CD8-positive, alpha-beta memory T cell (primary cell): ENCODE measurements at regions of chr9 and their contacts with region 1.

Region 1: GRCh38 chr9:104093647-104094533 is at the start of gene SMC2:
- DNase-seq: peak; percentile 84 to 97 (median 93)
- H3K4me3 ChIP-seq: peak within 1 kb of the TSS; percentile 72
- H3K4me3 Mint-ChIP-seq: peak within 1 kb of the TSS; percentile 98 to 100 (median 99)
- H3K27ac ChIP-seq: peak within 1 kb of the TSS; percentile 77
- H3K27ac Mint-ChIP-seq: peak within 1 kb of the TSS; percentile 97 to 100 (median 99)
- H3K4me1 ChIP-seq: peaks cover 16% of the 10 kb centered on the region
- H3K4me1 Mint-ChIP-seq: peaks cover 34 to 52% (median 49%) of the 10 kb centered on the region in 3 donors
- H3K27me3 ChIP-seq: no peaks in the 10 kb centered on the region
- H3K27me3 Mint-ChIP-seq: no peaks in the 10 kb centered on the region
- total RNA-seq, gene SMC2: 53.0 to 54.2 TPM

Region 2: GRCh38 chr9:103816146-103816545 is 277.7 kb before region 1 on chr9:
- CTCF ChIA-PET with region 1: no interaction called
- POLR2A ChIA-PET with region 1: no interaction called
- DNase-seq: no peak
- H3K4me3 ChIP-seq: no peak overlapping the region
- H3K4me3 Mint-ChIP-seq: no peak overlapping the region
- H3K27ac ChIP-seq: no peak overlapping the region
- H3K27ac Mint-ChIP-seq: no peak overlapping the region
- H3K4me1 ChIP-seq: no peaks in the 10 kb centered on the region
- H3K4me1 Mint-ChIP-seq: no peaks in the 10 kb centered on the region
- H3K27me3 ChIP-seq: no peaks in the 10 kb centered on the region
- H3K27me3 Mint-ChIP-seq: no peaks in the 10 kb centered on the region

Region 3: GRCh38 chr9:104075801-104076753 is 17.8 kb before region 1 on chr9:
- CTCF ChIA-PET with region 1: no interaction called
- POLR2A ChIA-PET with region 1: no interaction called
- DNase-seq: no peak
- H3K4me3 ChIP-seq: no peak overlapping the region
- H3K4me3 Mint-ChIP-seq: no peak overlapping the region
- H3K27ac ChIP-seq: no peak overlapping the region
- H3K27ac Mint-ChIP-seq: peak overlapping the region in 1 of 8 donors; percentile 46
- H3K4me1 ChIP-seq: no peaks in the 10 kb centered on the region
- H3K4me1 Mint-ChIP-seq: no peaks in the 10 kb centered on the region
- H3K27me3 ChIP-seq: no peaks in the 10 kb centered on the region
- H3K27me3 Mint-ChIP-seq: peaks cover 25 to 61% of the 10 kb centered on the region in 2 donors

Region 4: GRCh38 chr9:104144336-104144735 is 50.4 kb after region 1 on chr9:
- CTCF ChIA-PET with region 1: no interaction called
- POLR2A ChIA-PET with region 1: no interaction called
- DNase-seq: no peak
- H3K4me3 ChIP-seq: no peak overlapping the region
- H3K4me3 Mint-ChIP-seq: no peak overlapping the region
- H3K27ac ChIP-seq: no peak overlapping the region
- H3K27ac Mint-ChIP-seq: no peak overlapping the region
- H3K4me1 ChIP-seq: no peaks in the 10 kb centered on the region
- H3K4me1 Mint-ChIP-seq: peaks cover 3 to 7% (median 7%) of the 10 kb centered on the region in 3 donors
- H3K27me3 ChIP-seq: no peaks in the 10 kb centered on the region
- H3K27me3 Mint-ChIP-seq: no peaks in the 10 kb centered on the region

Region 5: GRCh38 chr9:104968025-104968982 is 874.4 kb after region 1 on chr9:
- CTCF ChIA-PET with region 1: no interaction called
- POLR2A ChIA-PET with region 1: interaction called, 11 read pairs
- DNase-seq: peak; percentile 79 to 92 (median 84)
- H3K4me3 ChIP-seq: peak overlapping the region; percentile 57
- H3K4me3 Mint-ChIP-seq: peak overlapping the region; percentile 81 to 97 (median 91)
- H3K27ac ChIP-seq: no peak overlapping the region
- H3K27ac Mint-ChIP-seq: peak overlapping the region in 7 of 8 donors; percentile 47 to 99 (median 91)
- H3K4me1 ChIP-seq: peaks cover 15% of the 10 kb centered on the region
- H3K4me1 Mint-ChIP-seq: peaks cover 11 to 12% (median 12%) of the 10 kb centered on the region in 3 donors
- H3K27me3 ChIP-seq: no peaks in the 10 kb centered on the region
- H3K27me3 Mint-ChIP-seq: peaks cover 13 to 25% of the 10 kb centered on the region in 2 donors